IMR-90 (cell line): ENCODE measurements at regions of chr3 and their contacts with region 1.

Region 1: GRCh38 chr3:31768479-31769123 is 212.5 kb downstream of the OSBPL10 start:
- DNase-seq: peak; percentile 58
- ATAC-seq: peak; percentile 74
- H3K4me3 ChIP-seq: no peak overlapping the region
- H3K27ac ChIP-seq: no peak overlapping the region
- H3K4me1 ChIP-seq: no peaks in the 10 kb centered on the region
- H3K27me3 ChIP-seq: no peaks in the 10 kb centered on the region
- CTCF ChIP-seq: peak; percentile 64
- POLR2A ChIP-seq: 0 out of 2 replicates have a peak, but pooled peaks have one; percentile 28
- RAD21 ChIP-seq: peak; percentile 81

Region 2: GRCh38 chr3:30768703-30769685 is 999.6 kb before region 1 on chr3:
- CTCF ChIA-PET with region 1: no interaction called
- POLR2A ChIA-PET with region 1: no interaction called
- dilution Hi-C with region 1: no loop called
- in situ Hi-C with region 1: no loop called
- intact Hi-C with region 1: loop called (anchors 2 kb)
- DNase-seq: peak; percentile 58
- ATAC-seq: peak; percentile 52
- H3K4me3 ChIP-seq: no peak overlapping the region
- H3K27ac ChIP-seq: no peak overlapping the region
- H3K4me1 ChIP-seq: 0 out of 2 replicates have a peak, but pooled peaks cover 2% of the 10 kb centered on the region
- H3K27me3 ChIP-seq: no peaks in the 10 kb centered on the region; the same call in 1 of the 2 replicates
- CTCF ChIP-seq: peak; percentile 75
- POLR2A ChIP-seq: no peak
- RAD21 ChIP-seq: peak; percentile 68

Region 3: GRCh38 chr3:31166249-31166885 is 602.2 kb before region 1 on chr3:
- CTCF ChIA-PET with region 1: no interaction called
- POLR2A ChIA-PET with region 1: no interaction called
- dilution Hi-C with region 1: no loop called
- in situ Hi-C with region 1: no loop called
- intact Hi-C with region 1: loop called (anchors 10 kb)
- DNase-seq: peak; percentile 84
- ATAC-seq: peak; percentile 77
- H3K4me3 ChIP-seq: no peak overlapping the region
- H3K27ac ChIP-seq: no peak overlapping the region
- H3K4me1 ChIP-seq: peaks cover 14% of the 10 kb centered on the region
- H3K27me3 ChIP-seq: no peaks in the 10 kb centered on the region
- CTCF ChIP-seq: no peak
- POLR2A ChIP-seq: no peak
- RAD21 ChIP-seq: no peak

Region 4: DNA sequence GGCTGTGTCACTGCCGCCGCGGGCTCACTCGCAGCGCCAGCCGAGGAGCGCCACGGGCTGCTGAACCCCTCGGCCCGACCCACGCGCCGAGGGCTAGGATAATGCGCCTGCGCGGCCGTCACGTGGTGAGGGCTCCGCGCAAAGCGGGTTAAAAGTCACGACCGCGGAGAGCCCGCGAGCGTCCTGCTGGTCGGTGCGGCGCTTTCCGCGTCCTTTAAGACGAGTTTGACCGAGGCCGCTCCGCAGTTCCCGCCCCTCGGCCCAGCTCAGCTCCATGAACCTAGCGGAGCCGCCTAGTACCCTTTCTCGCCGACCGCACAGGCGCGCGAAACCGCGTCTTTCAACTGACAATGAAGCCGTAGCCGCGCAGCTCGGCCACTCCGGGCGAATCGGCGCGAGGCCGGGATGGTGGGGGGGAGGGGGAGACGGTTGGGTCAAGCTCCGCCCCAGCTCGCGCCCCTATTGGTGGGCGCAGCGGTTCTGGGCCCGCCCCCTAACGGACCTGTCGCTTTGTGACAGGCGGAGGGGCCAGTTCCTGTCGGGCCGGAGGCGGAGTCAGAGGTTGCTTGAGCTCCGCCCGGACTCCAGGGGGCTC is 236.5 kb before region 1 on chr3:
- CTCF ChIA-PET with region 1: no interaction called
- POLR2A ChIA-PET with region 1: no interaction called
- dilution Hi-C with region 1: no loop called
- in situ Hi-C with region 1: no loop called
- intact Hi-C with region 1: loop called (anchors 5 kb)
- DNase-seq: peak; percentile 98
- ATAC-seq: peak; percentile 93
- H3K4me3 ChIP-seq: peak overlapping the region; percentile 77
- H3K27ac ChIP-seq: peak overlapping the region; percentile 95
- H3K4me1 ChIP-seq: no peaks in the 10 kb centered on the region
- H3K27me3 ChIP-seq: no peaks in the 10 kb centered on the region
- CTCF ChIP-seq: no peak
- POLR2A ChIP-seq: peak; percentile 70; the same call in 1 of the 2 replicates
- RAD21 ChIP-seq: no peak

Region 5: GRCh38 chr3:31550452-31551251 is 217.9 kb before region 1 on chr3:
- CTCF ChIA-PET with region 1: no interaction called
- POLR2A ChIA-PET with region 1: no interaction called
- dilution Hi-C with region 1: no loop called
- in situ Hi-C with region 1: loop called (anchors 10 kb)
- intact Hi-C with region 1: loop called (anchors 5 kb)
- DNase-seq: peak; percentile 40
- ATAC-seq: peak; percentile 64; the same call in 1 of the 2 replicates
- H3K4me3 ChIP-seq: no peak overlapping the region
- H3K27ac ChIP-seq: no peak overlapping the region
- H3K4me1 ChIP-seq: peaks cover 4% of the 10 kb centered on the region; the same call in 1 of the 2 replicates
- H3K27me3 ChIP-seq: no peaks in the 10 kb centered on the region
- CTCF ChIP-seq: peak; percentile 68
- POLR2A ChIP-seq: no peak
- RAD21 ChIP-seq: peak; percentile 45

Region 6: DNA sequence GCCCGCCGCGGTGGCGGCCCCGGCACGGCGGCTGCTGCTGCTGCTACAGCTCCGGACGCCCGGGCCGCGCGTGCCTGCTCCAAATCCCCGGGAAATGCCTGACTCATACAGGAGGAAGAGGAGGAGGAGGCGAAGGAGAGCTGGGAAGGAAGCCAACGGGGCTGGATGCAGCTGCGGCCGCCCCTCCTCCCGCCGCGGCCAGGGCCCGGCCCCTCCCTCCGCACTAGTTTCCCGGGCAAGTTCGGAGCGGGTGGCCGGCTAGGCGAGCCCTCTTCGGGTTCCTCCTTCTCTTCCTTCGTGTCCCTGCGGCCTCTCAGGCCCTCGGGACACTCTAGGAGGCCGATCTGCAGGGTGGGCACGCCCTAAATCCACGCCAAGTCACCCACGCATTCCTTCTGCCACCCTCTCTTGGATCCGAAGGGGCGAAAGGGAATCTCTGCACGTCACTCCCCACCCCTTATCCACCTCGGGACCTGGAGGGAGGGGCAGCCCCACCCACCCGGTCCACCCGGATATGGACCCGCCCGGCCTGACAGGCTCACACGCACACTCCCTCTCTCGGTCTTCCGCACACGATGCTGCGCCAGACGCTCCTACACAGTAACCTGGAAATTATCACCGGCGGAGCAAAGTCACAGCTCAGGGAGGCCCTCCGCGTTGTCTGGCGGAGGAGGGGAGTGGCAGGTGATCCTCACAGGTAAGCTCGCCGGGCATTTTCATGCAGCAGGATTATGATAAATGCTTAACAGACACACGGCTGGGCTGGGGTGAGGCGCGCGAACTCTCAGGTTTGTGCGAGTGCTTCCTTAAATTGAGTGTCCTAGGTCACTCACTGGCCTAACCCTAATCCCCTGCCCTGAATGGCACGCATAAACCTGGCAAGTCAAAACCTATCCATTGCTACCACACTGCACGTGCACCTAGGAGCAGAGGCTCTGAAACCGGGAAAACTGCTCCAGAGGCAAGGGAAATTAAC is 212.9 kb after region 1 on chr3 and contains the starts of genes OSBPL10 and ZNF860:
- CTCF ChIA-PET with region 1: no interaction called
- POLR2A ChIA-PET with region 1: no interaction called
- dilution Hi-C with region 1: no loop called
- in situ Hi-C with region 1: no loop called
- intact Hi-C with region 1: loop called (anchors 5 kb)
- DNase-seq: peak; percentile 92
- ATAC-seq: peak; percentile 87
- H3K4me3 ChIP-seq: peak within 1 kb of the TSS; percentile 87
- H3K27ac ChIP-seq: peak within 1 kb of the TSS; percentile 63
- H3K4me1 ChIP-seq: no peaks in the 10 kb centered on the region; the same call in 1 of the 2 replicates
- H3K27me3 ChIP-seq: no peaks in the 10 kb centered on the region
- CTCF ChIP-seq: no peak
- POLR2A ChIP-seq: peak; percentile 59
- RAD21 ChIP-seq: no peak
- total RNA-seq, gene OSBPL10: 7.2 and 9.5 TPM in 2 replicates
- total RNA-seq, gene ZNF860: 0.18 and 0.56 TPM in 2 replicates